ENCODE measurements at regions of chr22 and their contacts with region 1.

Region 1: DNA sequence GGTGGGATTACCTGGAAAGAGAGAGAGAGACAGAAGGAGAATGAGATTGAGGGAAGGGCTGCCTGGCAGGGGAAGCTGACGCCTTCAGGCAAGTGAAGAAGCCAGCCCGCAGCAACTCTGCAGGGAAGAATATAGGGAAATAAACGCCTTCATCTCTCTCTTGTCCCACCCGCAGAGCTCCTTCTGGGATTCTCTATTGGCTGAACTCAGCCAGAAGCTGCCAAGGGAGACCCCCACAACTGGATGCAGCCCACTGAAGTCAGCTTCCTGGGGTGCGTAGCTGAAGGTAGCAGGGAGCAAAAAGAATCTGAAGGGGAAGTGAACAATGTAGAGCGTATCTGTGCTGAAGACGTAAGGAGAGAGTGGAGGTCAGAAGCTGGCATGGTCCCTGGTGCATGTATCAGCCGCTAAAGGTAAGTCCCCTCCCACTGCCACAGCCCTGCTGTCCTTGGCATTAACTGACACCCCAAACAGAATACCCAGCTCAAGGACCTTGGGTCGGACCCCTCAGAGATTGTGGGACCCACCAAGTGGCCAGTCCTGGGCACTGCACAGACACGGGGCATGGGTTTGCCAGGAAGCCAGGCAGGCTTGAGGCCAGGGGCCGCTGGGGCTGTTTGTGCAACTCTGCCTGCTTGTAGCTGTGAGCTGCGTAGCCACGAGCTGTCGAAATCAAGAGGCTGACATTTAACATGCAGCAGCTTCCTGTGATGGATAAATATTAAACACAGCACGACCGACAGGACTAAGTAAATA is 469.9 kb downstream of the MN1 start:
- DNase-seq: peak in 1 of 2 experiments; percentile 73
- H3K4me3 ChIP-seq: no peak overlapping the region; a peak in 1 of 8 replicates
- H3K27ac ChIP-seq: no peak overlapping the region
- H3K4me1 ChIP-seq: peaks cover 2 to 8% (median 4%) of the 10 kb centered on the region in 4 experiments; a peak in 4 of 7 replicates
- H3K27me3 ChIP-seq: no peaks in the 10 kb centered on the region
- CTCF ChIP-seq: peak; percentile 59 to 81 (median 65)
- EP300 ChIP-seq: no peak
- POLR2A ChIP-seq: no peak
- RAD21 ChIP-seq: peak; percentile 68 to 83

Region 2: DNA sequence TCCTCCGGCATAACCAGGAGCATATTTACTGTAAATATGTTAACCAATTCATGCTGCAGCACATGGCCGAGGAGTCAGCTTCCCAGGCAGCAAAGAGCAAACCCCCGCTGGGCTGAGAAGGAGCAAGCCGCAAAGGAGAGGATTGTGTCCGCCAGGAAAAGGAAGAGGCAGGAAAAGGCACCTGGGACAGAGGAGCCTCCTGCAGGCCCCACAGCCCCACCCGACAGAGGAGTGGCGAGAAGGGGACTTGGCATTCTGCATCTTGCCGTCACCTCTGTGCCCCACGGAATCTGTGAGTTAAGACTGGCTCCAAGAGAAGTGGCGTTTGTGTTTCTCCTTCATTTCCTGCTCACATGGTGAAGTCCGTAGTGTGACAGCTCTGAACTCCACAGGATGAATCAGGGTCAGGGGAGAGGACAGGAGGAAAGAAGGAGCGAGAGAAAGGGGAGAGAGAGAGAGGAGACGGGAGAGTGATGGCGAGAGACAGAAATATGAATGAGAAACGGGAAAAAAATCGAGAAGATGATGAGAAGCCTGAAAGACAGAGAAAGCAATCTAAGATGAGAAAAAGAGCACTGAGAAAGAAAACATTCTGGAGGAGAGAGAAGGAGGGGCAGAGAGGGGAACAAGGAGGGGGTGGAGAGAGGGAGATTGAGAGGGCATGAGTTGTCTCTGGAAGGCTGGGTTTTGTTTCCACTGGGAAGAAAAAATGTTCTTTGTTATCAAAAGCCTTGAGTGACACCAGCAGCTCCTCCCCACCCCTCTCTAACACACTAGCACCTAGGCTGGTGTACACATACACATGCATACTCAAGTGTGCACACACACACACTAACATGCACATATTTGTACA is 19.8 kb before region 1 on chr22:
- CTCF ChIA-PET with region 1: interaction called, 15 read pairs
- POLR2A ChIA-PET with region 1: no interaction called
- DNase-seq: peak in 1 of 2 experiments; percentile 58
- H3K4me3 ChIP-seq: peak overlapping the region in 1 of 4 experiments; percentile 46; a peak in 2 of 8 replicates
- H3K27ac ChIP-seq: no peak overlapping the region
- H3K4me1 ChIP-seq: peaks cover 6 to 29% (median 16%) of the 10 kb centered on the region in 4 experiments; a peak in 6 of 7 replicates
- H3K27me3 ChIP-seq: peaks cover 0 to 7% (median 0%) of the 10 kb centered on the region in 4 experiments; a peak in 2 of 7 replicates
- CTCF ChIP-seq: no peak
- EP300 ChIP-seq: no peak
- POLR2A ChIP-seq: no peak
- RAD21 ChIP-seq: no peak; a peak in 1 of 4 replicates

Region 3: GRCh38 chr22:27318516-27318915 is 13.2 kb before region 1 on chr22:
- CTCF ChIA-PET with region 1: interaction called, 15 read pairs
- POLR2A ChIA-PET with region 1: no interaction called
- DNase-seq: no peak
- H3K4me3 ChIP-seq: no peak overlapping the region
- H3K27ac ChIP-seq: no peak overlapping the region
- H3K4me1 ChIP-seq: peaks cover 0 to 7% (median 2%) of the 10 kb centered on the region in 4 experiments; a peak in 3 of 7 replicates
- H3K27me3 ChIP-seq: no peaks in the 10 kb centered on the region
- CTCF ChIP-seq: no peak
- EP300 ChIP-seq: no peak
- POLR2A ChIP-seq: no peak
- RAD21 ChIP-seq: no peak

Region 4: GRCh38 chr22:27345142-27346090 is 13.7 kb after region 1 on chr22:
- CTCF ChIA-PET with region 1: interaction called, 17 read pairs
- POLR2A ChIA-PET with region 1: no interaction called
- DNase-seq: no peak
- H3K4me3 ChIP-seq: no peak overlapping the region
- H3K27ac ChIP-seq: no peak overlapping the region
- H3K4me1 ChIP-seq: no peaks in the 10 kb centered on the region
- H3K27me3 ChIP-seq: no peaks in the 10 kb centered on the region
- CTCF ChIP-seq: no peak
- EP300 ChIP-seq: no peak
- POLR2A ChIP-seq: no peak
- RAD21 ChIP-seq: no peak

Measured in H1 (cell line).